IMR-90 (cell line): ENCODE measurements at regions of chr13 and their contacts with region 1.

Region 1: DNA sequence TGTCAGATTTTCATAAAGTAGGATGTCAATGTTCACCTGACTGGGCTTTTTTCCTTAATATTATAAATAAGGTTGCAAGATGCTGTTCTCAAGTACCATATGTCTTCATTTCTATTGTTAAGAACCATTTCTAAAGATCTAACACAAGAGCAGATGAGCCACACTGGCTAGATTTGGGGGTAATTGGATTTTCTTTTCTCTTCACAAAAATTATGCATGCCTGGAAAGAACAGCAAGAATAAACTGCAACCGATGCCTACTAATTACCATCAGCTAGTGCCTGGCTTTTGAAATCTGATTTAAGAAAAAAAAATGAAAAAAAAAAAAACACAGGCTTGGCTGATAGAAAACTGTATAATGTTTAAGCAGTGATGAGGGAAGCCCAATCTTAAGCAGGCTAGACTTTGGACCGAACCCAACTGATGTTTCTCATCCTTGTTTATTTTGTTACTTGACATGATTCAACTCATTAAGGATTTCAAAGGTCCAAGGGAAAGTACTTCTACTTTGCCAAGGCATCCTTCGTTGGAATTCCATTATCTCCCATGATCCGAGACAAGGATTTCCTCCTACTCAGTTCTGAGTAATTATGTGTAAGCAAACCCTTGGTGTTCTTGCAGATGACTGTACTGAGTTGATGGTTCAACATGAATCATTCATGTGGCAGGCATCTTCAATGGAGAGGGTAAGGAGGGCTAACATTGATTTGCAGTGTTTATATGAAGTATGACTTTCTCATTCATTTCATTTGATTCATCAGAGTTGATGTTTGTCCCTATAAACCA is 300.5 kb downstream of the SPRY2 start:
- DNase-seq: peak; percentile 100
- ATAC-seq: peak; percentile 92
- H3K4me3 ChIP-seq: no peak overlapping the region
- H3K27ac ChIP-seq: no peak overlapping the region
- H3K4me1 ChIP-seq: peaks cover 10% of the 10 kb centered on the region; the same call in 1 of the 2 replicates
- H3K27me3 ChIP-seq: no peaks in the 10 kb centered on the region
- CTCF ChIP-seq: no peak
- POLR2A ChIP-seq: no peak
- RAD21 ChIP-seq: peak; percentile 19

Region 2: DNA sequence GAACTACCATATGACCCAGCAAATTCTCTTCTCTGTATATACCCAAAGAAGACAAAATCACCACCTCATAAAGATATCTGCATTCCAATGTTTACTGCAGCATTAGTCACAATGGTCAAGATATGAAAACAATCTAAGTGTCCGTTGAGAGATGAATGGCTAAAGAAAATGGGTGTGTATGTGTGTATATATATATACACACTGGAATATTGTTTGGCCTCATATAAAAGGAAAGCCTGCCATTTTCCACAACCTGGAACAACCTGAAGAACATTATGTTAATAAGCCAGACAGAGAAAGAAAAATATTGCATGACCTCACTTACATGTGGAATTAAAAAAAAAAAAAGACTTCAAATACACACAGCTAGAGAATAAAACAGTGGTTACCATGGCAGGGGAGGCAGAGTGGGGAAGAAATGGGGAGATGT is 604.8 kb before region 1 on chr13:
- CTCF ChIA-PET with region 1: no interaction called
- POLR2A ChIA-PET with region 1: no interaction called
- dilution Hi-C with region 1: no loop called
- in situ Hi-C with region 1: no loop called
- intact Hi-C with region 1: no loop called
- DNase-seq: peak; percentile 68
- ATAC-seq: peak; percentile 84
- H3K4me3 ChIP-seq: no peak overlapping the region
- H3K27ac ChIP-seq: no peak overlapping the region
- H3K4me1 ChIP-seq: peaks cover 2% of the 10 kb centered on the region; the same call in 1 of the 2 replicates
- H3K27me3 ChIP-seq: no peaks in the 10 kb centered on the region
- CTCF ChIP-seq: no peak
- POLR2A ChIP-seq: no peak
- RAD21 ChIP-seq: no peak

Region 3: GRCh38 chr13:79782541-79783205 is 257.7 kb before region 1 on chr13:
- CTCF ChIA-PET with region 1: no interaction called
- POLR2A ChIA-PET with region 1: no interaction called
- dilution Hi-C with region 1: no loop called
- in situ Hi-C with region 1: loop called (anchors 25 kb)
- intact Hi-C with region 1: loop called (anchors 2 kb)
- DNase-seq: peak; percentile 77
- ATAC-seq: peak; percentile 86
- H3K4me3 ChIP-seq: no peak overlapping the region
- H3K27ac ChIP-seq: peak overlapping the region; percentile 58
- H3K4me1 ChIP-seq: peaks cover 11% of the 10 kb centered on the region
- H3K27me3 ChIP-seq: no peaks in the 10 kb centered on the region
- CTCF ChIP-seq: no peak
- POLR2A ChIP-seq: no peak
- RAD21 ChIP-seq: peak; percentile 10; the same call in 1 of the 2 replicates

Region 4: GRCh38 chr13:79861731-79862130 is 178.7 kb before region 1 on chr13:
- CTCF ChIA-PET with region 1: no interaction called
- POLR2A ChIA-PET with region 1: no interaction called
- dilution Hi-C with region 1: no loop called
- in situ Hi-C with region 1: no loop called
- intact Hi-C with region 1: no loop called
- DNase-seq: no peak
- ATAC-seq: no peak
- H3K4me3 ChIP-seq: no peak overlapping the region
- H3K27ac ChIP-seq: no peak overlapping the region
- H3K4me1 ChIP-seq: no peaks in the 10 kb centered on the region
- H3K27me3 ChIP-seq: no peaks in the 10 kb centered on the region
- CTCF ChIP-seq: no peak
- POLR2A ChIP-seq: no peak
- RAD21 ChIP-seq: no peak

Region 5: GRCh38 chr13:80083853-80084676 is 43.7 kb after region 1 on chr13:
- CTCF ChIA-PET with region 1: no interaction called
- POLR2A ChIA-PET with region 1: no interaction called
- dilution Hi-C with region 1: no loop called
- in situ Hi-C with region 1: no loop called
- intact Hi-C with region 1: no loop called
- DNase-seq: peak; percentile 93
- ATAC-seq: peak; percentile 76
- H3K4me3 ChIP-seq: no peak overlapping the region; the same call in 1 of the 2 replicates
- H3K27ac ChIP-seq: peak overlapping the region; percentile 74
- H3K4me1 ChIP-seq: peaks cover 8% of the 10 kb centered on the region
- H3K27me3 ChIP-seq: no peaks in the 10 kb centered on the region
- CTCF ChIP-seq: no peak
- POLR2A ChIP-seq: no peak
- RAD21 ChIP-seq: 0 out of 2 replicates have a peak, but pooled peaks have one; percentile 6

Region 6: GRCh38 chr13:80132741-80133601 is 92.6 kb after region 1 on chr13:
- CTCF ChIA-PET with region 1: interaction called, 5 read pairs
- POLR2A ChIA-PET with region 1: no interaction called
- dilution Hi-C with region 1: no loop called
- in situ Hi-C with region 1: no loop called
- intact Hi-C with region 1: loop called (anchors 5 kb)
- DNase-seq: peak; percentile 62
- ATAC-seq: peak; percentile 88
- H3K4me3 ChIP-seq: peak overlapping the region; percentile 26
- H3K27ac ChIP-seq: peak overlapping the region; percentile 13
- H3K4me1 ChIP-seq: peaks cover 3% of the 10 kb centered on the region; the same call in 1 of the 2 replicates
- H3K27me3 ChIP-seq: no peaks in the 10 kb centered on the region
- CTCF ChIP-seq: no peak
- POLR2A ChIP-seq: no peak
- RAD21 ChIP-seq: no peak